ENCODE measurements at regions of chr5 and their contacts with region 1.

Region 1: GRCh38 chr5:136212252-136212721 is 19.3 kb upstream of the SMIM32 start:
- ATAC-seq: peak; percentile 64 to 83 (median 72)
- H3K4me3 ChIP-seq: no peak overlapping the region
- H3K27ac ChIP-seq: no peak overlapping the region
- H3K4me1 ChIP-seq: no peaks in the 10 kb centered on the region

Region 2: DNA sequence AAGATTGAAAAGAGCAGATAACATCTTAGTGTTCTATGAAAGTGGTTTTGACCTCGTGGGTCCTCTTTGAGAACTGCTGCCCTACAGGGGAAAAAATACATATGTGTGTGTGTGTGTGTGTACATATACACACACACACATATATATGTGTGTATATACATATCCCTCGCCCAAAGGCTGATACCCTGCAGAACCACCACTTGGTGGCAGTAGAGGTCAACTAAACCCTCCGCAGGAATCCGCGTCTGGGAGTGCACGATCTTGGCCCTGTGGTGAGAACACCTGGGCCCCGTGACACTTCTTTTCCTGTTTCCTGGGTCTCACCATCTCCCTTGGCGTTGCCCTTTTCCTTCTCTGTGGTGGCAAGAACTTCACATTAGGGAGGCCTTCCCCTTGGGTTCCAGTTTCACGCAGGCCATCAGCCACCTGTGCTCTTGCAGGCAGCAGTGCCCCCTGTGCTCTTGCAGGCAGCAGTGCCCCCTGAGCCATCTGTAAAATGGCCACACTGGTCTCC is 324.9 kb before region 1 on chr5:
- in situ Hi-C with region 1: loop called in 4 of 9 experiments (anchors 25 kb)
- ATAC-seq: peak; percentile 76 to 96 (median 87)
- H3K4me3 ChIP-seq: no peak overlapping the region
- H3K27ac ChIP-seq: no peak overlapping the region
- H3K4me1 ChIP-seq: no peaks in the 10 kb centered on the region

Region 3: GRCh38 chr5:135973323-135974020 is 238.8 kb before region 1 on chr5:
- in situ Hi-C with region 1: loop called in 1 of 9 experiments (anchors 25 kb)
- ATAC-seq: peak in 4 of 8 experiments; percentile 11 to 67 (median 44)
- H3K4me3 ChIP-seq: no peak overlapping the region
- H3K27ac ChIP-seq: no peak overlapping the region
- H3K4me1 ChIP-seq: peaks cover 0 to 9% of the 10 kb centered on the region in 2 donors

Region 4: DNA sequence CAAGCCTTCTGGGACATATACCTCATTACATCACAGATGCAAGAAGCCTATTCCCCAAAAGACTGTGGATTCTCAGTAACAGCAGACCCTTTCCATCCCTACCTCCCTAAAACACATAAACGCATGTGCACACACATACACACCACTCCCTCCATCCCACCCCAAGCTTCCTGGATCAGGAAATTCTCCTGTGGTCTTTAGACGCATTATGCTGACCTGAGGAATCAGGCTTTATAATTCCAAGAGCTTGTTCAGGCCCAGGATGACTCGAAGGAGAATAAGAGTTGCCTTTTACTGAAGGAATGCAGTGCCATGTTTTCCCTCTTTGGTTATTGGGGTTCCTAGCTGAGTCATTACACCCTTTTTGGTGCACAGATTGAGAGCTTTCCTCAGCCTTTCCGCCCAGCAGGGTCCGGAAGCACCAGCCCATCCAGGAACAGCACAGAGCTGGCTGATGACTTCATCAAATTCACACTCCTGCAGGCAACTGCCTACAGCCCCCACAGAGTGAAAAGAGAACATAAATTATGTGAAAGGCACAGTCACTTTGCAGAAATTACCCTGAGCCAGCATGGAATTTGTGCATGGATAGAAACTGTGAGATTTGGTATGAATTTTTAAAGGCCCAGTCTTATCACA is 538.1 kb after region 1 on chr5:
- in situ Hi-C with region 1: no loop called
- ATAC-seq: peak; percentile 44 to 100 (median 100)
- H3K4me3 ChIP-seq: no peak overlapping the region
- H3K27ac ChIP-seq: peak overlapping the region in 1 of 2 donors; percentile 44
- H3K4me1 ChIP-seq: peaks cover 3 to 14% of the 10 kb centered on the region in 2 donors